ENCODE measurements at regions of chr13 and their contacts with region 1.

Region 1: DNA sequence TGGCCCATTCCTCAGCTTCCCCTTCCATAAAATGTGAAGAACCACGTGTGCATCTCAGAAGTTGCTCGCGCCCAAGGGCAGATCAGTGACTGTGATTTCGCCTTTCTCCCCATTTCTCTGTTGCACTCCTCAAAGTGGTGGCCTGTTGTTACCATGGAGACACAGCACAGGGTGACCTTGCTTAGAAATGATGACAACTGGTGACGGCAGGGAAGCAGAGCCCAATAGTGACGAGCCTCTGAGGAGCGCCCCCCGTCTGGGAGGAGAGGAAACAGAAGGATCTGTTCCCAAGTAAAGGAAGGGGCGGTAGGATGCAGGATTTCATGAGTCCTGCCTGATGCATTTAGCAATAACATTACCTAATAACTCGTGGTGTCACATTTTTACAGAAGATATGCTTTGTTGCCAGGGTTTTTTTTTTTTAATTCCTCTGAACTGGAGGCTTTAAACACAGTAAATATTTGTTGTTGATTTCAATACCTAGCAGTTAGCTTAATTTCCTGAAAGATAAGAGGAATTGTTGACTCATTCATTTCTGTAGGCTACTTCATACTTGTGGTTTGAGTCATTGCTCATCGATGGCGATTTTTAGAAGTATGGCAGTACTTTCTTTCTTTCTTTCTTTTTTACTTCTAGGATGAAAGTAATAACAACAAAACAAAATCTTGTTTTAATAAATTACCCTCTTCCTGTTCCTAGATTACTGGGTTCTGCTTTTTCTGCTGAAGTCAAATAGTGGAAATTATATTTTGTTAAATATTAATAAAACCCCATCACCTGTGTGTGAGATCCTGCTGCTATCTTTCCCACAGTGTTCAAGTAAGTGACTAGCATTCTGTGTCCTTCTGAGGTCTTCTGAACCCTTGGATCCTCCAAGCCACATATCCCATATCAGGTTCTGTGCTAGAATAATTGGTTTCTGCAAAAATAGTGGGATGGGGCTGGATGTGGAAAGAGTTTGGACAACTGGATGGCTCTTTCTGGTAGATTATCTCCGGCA is 36.0 kb downstream of the MBNL2 start:
- DNase-seq: peak; percentile 59 to 82
- ATAC-seq: peak; percentile 42
- H3K4me3 ChIP-seq: no peak overlapping the region
- H3K27ac ChIP-seq: peak overlapping the region; percentile 39 to 83
- H3K4me1 ChIP-seq: peaks cover 24 to 26% of the 10 kb centered on the region in 2 donors
- H3K27me3 ChIP-seq: no peaks in the 10 kb centered on the region

Region 2: GRCh38 chr13:97386801-97387484 is 128.8 kb after region 1 on chr13:
- intact Hi-C with region 1: no loop called
- DNase-seq: peak; percentile 66 to 75
- ATAC-seq: peak; percentile 44
- H3K4me3 ChIP-seq: no peak overlapping the region
- H3K27ac ChIP-seq: no peak overlapping the region
- H3K4me1 ChIP-seq: peaks cover 3 to 10% of the 10 kb centered on the region in 2 donors
- H3K27me3 ChIP-seq: no peaks in the 10 kb centered on the region

Region 3: GRCh38 chr13:97432917-97433726 is 175.0 kb after region 1 on chr13:
- intact Hi-C with region 1: loop called in 1 of 2 experiments (anchors 10 kb)
- DNase-seq: peak; percentile 99
- ATAC-seq: peak; percentile 97
- H3K4me3 ChIP-seq: peak overlapping the region; percentile 82 to 91
- H3K27ac ChIP-seq: peak overlapping the region; percentile 96 to 100
- H3K4me1 ChIP-seq: peaks cover 0 to 1% of the 10 kb centered on the region in 2 donors
- H3K27me3 ChIP-seq: no peaks in the 10 kb centered on the region